ENCODE measurements at regions of chr1 and their contacts with region 1.

Region 1: DNA sequence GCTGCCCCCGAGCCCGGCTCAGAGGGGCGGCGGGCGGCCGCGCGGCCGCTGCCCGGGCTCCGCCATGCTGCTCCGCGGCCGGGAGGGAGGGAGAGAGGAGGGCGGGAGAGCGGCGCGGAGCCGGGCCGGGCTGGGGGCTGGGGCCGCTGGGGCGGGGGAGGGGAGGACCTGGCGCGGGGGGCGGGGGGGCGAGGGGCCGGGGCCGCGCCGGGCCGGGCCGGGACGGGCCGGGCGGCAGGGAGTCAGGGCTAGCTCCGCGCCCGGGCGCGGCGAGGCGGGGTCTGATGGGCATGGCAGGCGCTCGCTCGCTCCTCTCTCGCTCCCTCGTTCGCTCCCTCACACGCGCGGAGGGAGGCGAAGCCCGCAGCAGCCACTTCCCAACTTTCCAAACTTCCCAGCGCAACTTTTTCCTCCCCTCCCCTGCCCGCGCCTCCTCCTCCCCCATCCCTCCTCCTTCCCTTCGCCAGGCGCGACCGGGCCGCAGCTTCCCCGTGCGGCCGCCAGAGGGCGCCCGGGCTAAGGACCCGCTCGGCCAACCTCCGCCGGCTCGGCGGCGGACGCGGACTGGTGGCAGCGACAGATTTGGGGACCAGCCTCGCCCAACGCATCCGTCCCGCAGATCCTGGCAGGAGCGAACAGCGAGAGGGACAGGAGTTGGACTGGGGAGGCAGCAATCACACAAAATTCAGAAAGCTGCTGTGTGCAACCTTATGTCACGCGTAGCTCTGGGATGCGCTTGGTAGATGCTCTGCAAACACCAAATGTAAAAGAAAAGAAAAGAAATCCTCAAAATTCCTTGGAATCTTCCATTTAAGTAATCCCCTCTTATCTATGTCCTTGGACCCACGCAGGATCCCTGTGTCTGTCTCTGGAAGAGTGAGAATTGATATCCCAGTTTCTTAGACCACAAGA is at the start of gene TRABD2B:
- DNase-seq: peak; percentile 87
- ATAC-seq: peak; percentile 91
- total RNA-seq, gene TRABD2B: 0.51 TPM

Region 2: DNA sequence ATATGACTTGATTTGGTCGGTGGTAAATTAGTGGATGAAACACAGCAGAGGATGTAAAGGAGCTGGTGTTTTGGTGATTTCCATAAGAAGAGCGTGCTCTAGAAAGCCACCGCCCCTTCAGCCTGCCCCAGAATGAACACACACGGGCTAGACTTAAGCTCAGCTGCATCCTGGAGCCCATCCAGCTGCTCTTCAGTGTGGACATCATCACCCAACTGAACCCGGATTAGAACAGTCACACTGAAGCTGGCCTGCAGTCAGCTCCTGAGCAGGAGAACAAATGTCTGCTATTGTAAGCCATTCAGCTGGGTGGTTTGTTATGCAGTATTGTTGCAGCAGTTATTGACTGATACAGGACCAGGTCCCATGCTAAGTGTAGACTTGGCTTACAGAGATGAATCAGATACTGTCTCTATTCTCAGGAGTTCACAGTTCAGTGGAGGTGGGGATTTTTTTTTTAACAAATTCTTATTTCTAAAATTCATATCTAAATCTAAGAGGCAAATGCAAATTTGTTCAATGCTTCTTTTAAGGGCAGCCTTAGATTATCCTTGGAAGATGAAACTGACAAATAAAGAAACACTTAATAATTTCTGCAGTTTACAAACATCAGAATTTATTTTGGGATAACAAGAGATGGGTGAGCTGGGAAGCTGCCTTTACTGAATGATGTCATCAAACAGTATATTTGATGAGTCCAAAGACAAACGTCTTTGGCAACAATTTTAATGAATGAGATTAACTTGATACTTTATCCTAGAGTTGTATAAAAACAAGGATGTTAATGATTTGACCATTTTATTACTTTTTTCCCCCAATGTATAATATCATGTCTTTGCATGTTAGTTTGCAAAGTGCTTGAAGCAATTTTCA is 251.6 kb before region 1 on chr1:
- intact Hi-C with region 1: loop called (anchors 10 kb)
- DNase-seq: no peak
- ATAC-seq: peak; percentile 75

Region 3: DNA sequence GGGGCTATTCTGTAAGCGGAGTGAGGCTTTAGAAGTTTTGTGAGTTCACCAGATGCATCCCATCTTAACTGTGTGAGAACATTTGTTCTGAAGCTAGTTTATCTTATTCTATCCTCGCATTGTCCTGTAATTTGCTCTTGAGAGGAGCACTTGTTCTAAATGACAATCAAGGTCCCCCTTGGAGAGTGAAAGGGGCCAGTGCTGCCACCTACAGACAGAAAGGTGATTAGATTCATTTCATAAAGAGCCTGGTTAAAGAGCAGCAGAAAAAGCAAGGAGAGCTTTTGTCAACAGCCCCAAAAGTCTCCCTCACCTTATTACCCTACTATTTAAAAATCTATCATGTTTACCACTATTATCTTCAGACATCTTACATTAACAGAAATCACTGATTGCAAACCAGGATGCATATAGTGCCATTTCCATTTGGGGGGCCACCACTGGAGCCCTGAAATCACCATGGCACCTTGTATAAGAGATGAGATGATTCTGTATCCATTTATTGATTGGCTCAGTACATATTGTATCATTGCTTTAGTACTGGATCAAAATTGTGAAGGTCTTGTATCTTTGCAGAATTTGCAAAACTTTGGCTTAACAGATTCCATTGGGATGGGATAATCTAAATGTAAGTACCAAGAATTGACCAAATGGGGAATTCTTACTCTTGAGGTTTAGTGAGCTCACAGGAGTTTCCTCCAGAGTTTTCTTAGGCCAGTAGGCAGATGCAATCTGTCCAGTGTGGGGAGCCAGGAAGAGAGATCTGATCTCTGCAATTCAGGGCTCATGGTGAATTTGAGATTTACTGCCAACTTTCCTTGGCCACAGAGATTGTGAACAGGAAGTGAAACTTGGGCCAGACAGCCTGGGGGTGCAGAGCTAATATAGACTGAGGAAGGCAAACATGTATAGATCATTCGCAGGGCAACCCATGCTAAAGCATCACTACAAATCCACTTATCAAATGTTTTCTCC is 63.9 kb after region 1 on chr1:
- intact Hi-C with region 1: loop called (anchors 5 kb)
- DNase-seq: no peak
- ATAC-seq: peak; percentile 85

Region 4: DNA sequence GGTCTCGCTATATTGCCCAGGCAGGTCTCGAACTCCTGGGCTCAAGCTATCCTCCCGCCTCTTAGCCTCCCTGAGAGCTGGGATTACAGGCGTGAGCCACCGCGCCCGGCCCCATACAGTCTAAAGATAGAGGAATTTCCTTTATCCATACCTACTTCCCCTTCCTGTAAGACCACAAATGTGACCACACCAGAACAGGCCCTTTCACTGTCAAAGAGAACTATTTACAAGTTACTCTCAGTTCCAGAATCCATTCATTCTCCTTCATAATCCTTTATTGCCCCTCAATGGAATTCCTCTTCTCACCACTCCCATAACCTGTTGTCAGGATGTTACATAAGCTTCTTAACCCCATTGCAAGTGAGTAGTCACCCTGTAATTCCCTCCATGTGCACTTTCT is 198.7 kb after region 1 on chr1:
- intact Hi-C with region 1: no loop called
- DNase-seq: no peak
- ATAC-seq: no peak

Measured in Right ventricle myocardium superior (tissue), 1 donor.